CD4-positive, alpha-beta memory T cell (primary cell): ENCODE measurements at regions of chr7 and their contacts with region 1.

Region 1: GRCh38 chr7:7920481-7920880 is 48.1 kb upstream of the GLCCI1 start:
- DNase-seq: peak; percentile 29 to 47 (median 40)
- H3K4me3 ChIP-seq: peak overlapping the region in 1 of 2 donors; percentile 63
- H3K4me3 Mint-ChIP-seq: peak overlapping the region; percentile 78 to 91 (median 83)
- H3K27ac ChIP-seq: no peak overlapping the region
- H3K27ac Mint-ChIP-seq: peak overlapping the region; percentile 30 to 92 (median 90)
- H3K4me1 ChIP-seq: peaks cover 46% of the 10 kb centered on the region
- H3K4me1 Mint-ChIP-seq: peaks cover 30 to 57% (median 38%) of the 10 kb centered on the region in 4 donors
- H3K27me3 ChIP-seq: no peaks in the 10 kb centered on the region
- H3K27me3 Mint-ChIP-seq: no peaks in the 10 kb centered on the region

Region 2: GRCh38 chr7:7816084-7816483 is 104.4 kb before region 1 on chr7:
- CTCF ChIA-PET with region 1: no interaction called
- POLR2A ChIA-PET with region 1: no interaction called
- intact Hi-C with region 1: loop called (anchors 10 kb)
- DNase-seq: peak in 4 of 5 donors; percentile 21 to 57 (median 50)
- H3K4me3 ChIP-seq: peak overlapping the region in 1 of 2 donors; percentile 12
- H3K4me3 Mint-ChIP-seq: peak overlapping the region; percentile 54 to 88 (median 77)
- H3K27ac ChIP-seq: no peak overlapping the region
- H3K27ac Mint-ChIP-seq: peak overlapping the region; percentile 12 to 89 (median 65)
- H3K4me1 ChIP-seq: peaks cover 34% of the 10 kb centered on the region
- H3K4me1 Mint-ChIP-seq: peaks cover 33 to 42% (median 39%) of the 10 kb centered on the region in 4 donors
- H3K27me3 ChIP-seq: no peaks in the 10 kb centered on the region
- H3K27me3 Mint-ChIP-seq: no peaks in the 10 kb centered on the region

Region 3: GRCh38 chr7:7944619-7945282 is 24.3 kb after region 1 on chr7:
- CTCF ChIA-PET with region 1: interaction called, 3 read pairs
- POLR2A ChIA-PET with region 1: interaction called, 13 read pairs
- intact Hi-C with region 1: loop called (anchors 2 kb)
- DNase-seq: peak; percentile 64 to 77 (median 75)
- H3K4me3 ChIP-seq: peak overlapping the region; percentile 26 to 29
- H3K4me3 Mint-ChIP-seq: peak overlapping the region; percentile 70 to 89 (median 82)
- H3K27ac ChIP-seq: peak overlapping the region; percentile 59
- H3K27ac Mint-ChIP-seq: peak overlapping the region; percentile 78 to 97 (median 90)
- H3K4me1 ChIP-seq: peaks cover 42% of the 10 kb centered on the region
- H3K4me1 Mint-ChIP-seq: peaks cover 21 to 51% (median 28%) of the 10 kb centered on the region in 4 donors
- H3K27me3 ChIP-seq: no peaks in the 10 kb centered on the region
- H3K27me3 Mint-ChIP-seq: no peaks in the 10 kb centered on the region